Transverse colon (tissue), 4 donors: ENCODE measurements at regions of chr3 and their contacts with region 1.

Region 1: GRCh38 chr3:119676771-119677640 is at the start of gene COX17:
- DNase-seq: peak; percentile 98
- H3K4me3 ChIP-seq: peak within 1 kb of the TSS; percentile 57 to 82 (median 70)
- H3K27ac ChIP-seq: peak within 1 kb of the TSS; percentile 92 to 96 (median 93)
- H3K4me1 ChIP-seq: peaks cover 0 to 19% (median 10%) of the 10 kb centered on the region in 4 donors
- H3K27me3 ChIP-seq: no peaks in the 10 kb centered on the region
- CTCF ChIP-seq: no peak
- EP300 ChIP-seq: no peak
- POLR2A ChIP-seq: peak; percentile 82
- total RNA-seq, gene COX17: 2.2 to 49.2 (median 24.2) TPM

Region 2: DNA sequence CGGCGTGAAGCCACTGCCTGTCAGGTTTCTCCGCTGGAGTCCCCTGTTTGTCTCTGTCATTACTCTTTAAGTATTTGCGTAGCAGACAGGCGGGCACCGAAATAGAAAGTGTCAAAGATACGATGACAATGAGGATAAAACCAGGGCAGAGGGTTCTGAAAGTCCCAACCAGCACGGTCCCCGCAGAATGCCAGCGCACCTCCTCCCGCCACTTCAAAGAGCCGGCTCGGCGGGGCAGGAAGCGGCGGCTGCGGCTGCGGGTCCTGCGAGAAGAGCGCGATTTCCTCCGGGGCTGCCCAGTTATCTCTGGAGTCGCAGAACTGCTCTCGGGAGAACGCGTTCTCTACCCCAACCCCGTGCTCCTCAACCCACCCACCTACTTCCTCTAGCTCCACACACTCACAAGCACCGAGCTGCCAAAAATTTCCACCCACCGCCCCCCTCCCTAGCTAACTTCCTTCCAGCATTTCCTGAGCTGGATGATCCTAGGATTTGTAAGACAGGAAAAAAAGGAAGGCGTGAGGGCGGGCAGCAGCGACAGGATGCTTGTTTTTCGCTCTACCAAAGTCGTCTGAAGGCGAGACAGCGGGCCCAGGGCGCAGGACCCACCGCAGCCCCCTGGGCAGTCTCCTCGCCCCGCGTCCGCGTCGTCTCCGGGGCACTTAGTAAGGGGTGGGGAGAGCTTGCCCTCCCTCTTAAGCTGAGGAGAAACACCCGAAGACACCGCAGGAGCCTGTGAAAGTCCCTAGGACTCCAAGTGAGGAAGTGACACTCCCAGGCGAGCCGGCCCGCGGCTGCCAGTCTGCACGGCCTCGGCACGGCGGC is 382.9 kb before region 1 on chr3 and contains the start of gene ARHGAP31:
- in situ Hi-C with region 1: loop called in 1 of 4 experiments (anchors 25 kb)
- intact Hi-C with region 1: no loop called
- DNase-seq: peak; percentile 73
- H3K4me3 ChIP-seq: peak within 1 kb of the TSS; percentile 72 to 79 (median 76)
- H3K27ac ChIP-seq: peak within 1 kb of the TSS; percentile 90 to 92 (median 92)
- H3K4me1 ChIP-seq: peaks cover 6 to 37% (median 14%) of the 10 kb centered on the region in 4 donors
- H3K27me3 ChIP-seq: no peaks in the 10 kb centered on the region
- CTCF ChIP-seq: no peak
- EP300 ChIP-seq: no peak
- POLR2A ChIP-seq: peak; percentile 19
- total RNA-seq, gene ARHGAP31: 6.7 to 68.5 (median 9.6) TPM

Region 3: DNA sequence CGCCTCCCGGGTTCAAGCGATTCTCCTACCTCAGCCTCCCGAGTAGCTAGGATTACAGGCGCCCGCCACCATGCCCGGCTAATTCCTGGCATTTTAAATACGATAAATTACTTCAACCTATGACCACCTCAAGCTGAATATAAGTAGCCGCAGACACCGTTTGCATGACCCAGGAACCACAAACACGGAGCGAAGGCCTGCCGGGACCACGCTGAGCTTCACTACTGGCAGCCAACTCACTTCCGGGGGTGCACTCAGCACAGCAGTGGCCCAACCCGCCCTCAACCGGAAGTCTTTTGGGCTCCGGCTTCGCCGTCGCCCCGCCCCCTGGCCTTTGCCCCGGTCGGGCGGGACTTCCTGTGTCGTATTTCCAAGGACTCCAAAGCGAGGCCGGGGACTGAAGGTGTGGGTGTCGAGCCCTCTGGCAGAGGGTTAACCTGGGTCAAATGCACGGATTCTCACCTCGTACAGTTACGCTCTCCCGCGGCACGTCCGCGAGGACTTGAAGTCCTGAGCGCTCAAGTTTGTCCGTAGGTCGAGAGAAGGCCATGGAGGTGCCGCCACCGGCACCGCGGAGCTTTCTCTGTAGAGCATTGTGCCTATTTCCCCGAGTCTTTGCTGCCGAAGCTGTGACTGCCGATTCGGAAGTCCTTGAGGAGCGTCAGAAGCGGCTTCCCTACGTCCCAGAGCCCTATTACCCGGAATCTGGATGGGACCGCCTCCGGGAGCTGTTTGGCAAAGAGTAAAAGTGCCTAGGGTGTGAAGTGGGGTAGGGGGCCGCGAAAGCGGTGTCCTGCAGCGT is 178.6 kb before region 1 on chr3 and contains the start of gene TIMMDC1:
- in situ Hi-C with region 1: loop called in 2 of 4 experiments (anchors 25 kb)
- intact Hi-C with region 1: no loop called
- DNase-seq: peak; percentile 98
- H3K4me3 ChIP-seq: peak within 1 kb of the TSS; percentile 59 to 93 (median 78)
- H3K27ac ChIP-seq: peak within 1 kb of the TSS; percentile 92 to 99 (median 96)
- H3K4me1 ChIP-seq: peaks cover 20 to 38% (median 25%) of the 10 kb centered on the region in 4 donors
- H3K27me3 ChIP-seq: no peaks in the 10 kb centered on the region
- CTCF ChIP-seq: no peak
- EP300 ChIP-seq: no peak
- POLR2A ChIP-seq: peak; percentile 93
- total RNA-seq, gene TIMMDC1: 25.7 to 50.8 (median 35.0) TPM

Region 4: GRCh38 chr3:119524931-119525662 is 151.9 kb before region 1 on chr3:
- in situ Hi-C with region 1: loop called in 1 of 4 experiments (anchors 25 kb)
- intact Hi-C with region 1: no loop called
- DNase-seq: no peak
- H3K4me3 ChIP-seq: no peak overlapping the region
- H3K27ac ChIP-seq: no peak overlapping the region
- H3K4me1 ChIP-seq: no peaks in the 10 kb centered on the region
- H3K27me3 ChIP-seq: no peaks in the 10 kb centered on the region
- CTCF ChIP-seq: peak in 1 of 5 experiments; percentile 11
- EP300 ChIP-seq: no peak
- POLR2A ChIP-seq: no peak

Region 5: GRCh38 chr3:119604878-119605277 is 72.1 kb before region 1 on chr3:
- in situ Hi-C with region 1: no loop called
- intact Hi-C with region 1: no loop called
- DNase-seq: no peak
- H3K4me3 ChIP-seq: no peak overlapping the region
- H3K27ac ChIP-seq: no peak overlapping the region
- H3K4me1 ChIP-seq: no peaks in the 10 kb centered on the region
- H3K27me3 ChIP-seq: no peaks in the 10 kb centered on the region
- CTCF ChIP-seq: no peak
- EP300 ChIP-seq: no peak
- POLR2A ChIP-seq: no peak

Region 6: GRCh38 chr3:120021523-120021922 is 344.5 kb after region 1 on chr3:
- in situ Hi-C with region 1: no loop called
- intact Hi-C with region 1: no loop called
- DNase-seq: no peak
- H3K4me3 ChIP-seq: no peak overlapping the region
- H3K27ac ChIP-seq: no peak overlapping the region
- H3K4me1 ChIP-seq: peaks cover 3 to 19% (median 6%) of the 10 kb centered on the region in 4 donors
- H3K27me3 ChIP-seq: no peaks in the 10 kb centered on the region
- CTCF ChIP-seq: no peak
- EP300 ChIP-seq: no peak
- POLR2A ChIP-seq: no peak